ENCODE measurements at regions of chr3 and their contacts with region 1.

Region 1: GRCh38 chr3:44510000-44510368 is 32.5 kb upstream of the ZNF445 start:
- DNase-seq: no peak
- H3K4me3 Mint-ChIP-seq: peak overlapping the region; percentile 90
- H3K27ac Mint-ChIP-seq: peak overlapping the region; percentile 75
- H3K4me1 Mint-ChIP-seq: peaks cover 38% of the 10 kb centered on the region
- H3K27me3 Mint-ChIP-seq: no peaks in the 10 kb centered on the region

Region 2: GRCh38 chr3:44323341-44323955 is 186.5 kb before region 1 on chr3:
- intact Hi-C with region 1: loop called (anchors 2 kb)
- DNase-seq: peak; percentile 22
- H3K4me3 Mint-ChIP-seq: no peak overlapping the region
- H3K27ac Mint-ChIP-seq: no peak overlapping the region
- H3K4me1 Mint-ChIP-seq: no peaks in the 10 kb centered on the region
- H3K27me3 Mint-ChIP-seq: peaks cover 23% of the 10 kb centered on the region

Region 3: GRCh38 chr3:44439499-44440295 is 70.3 kb before region 1 on chr3:
- intact Hi-C with region 1: loop called (anchors 1 kb)
- DNase-seq: peak; percentile 69
- H3K4me3 Mint-ChIP-seq: peak overlapping the region; percentile 65
- H3K27ac Mint-ChIP-seq: peak overlapping the region; percentile 84
- H3K4me1 Mint-ChIP-seq: peaks cover 46% of the 10 kb centered on the region
- H3K27me3 Mint-ChIP-seq: no peaks in the 10 kb centered on the region

Region 4: DNA sequence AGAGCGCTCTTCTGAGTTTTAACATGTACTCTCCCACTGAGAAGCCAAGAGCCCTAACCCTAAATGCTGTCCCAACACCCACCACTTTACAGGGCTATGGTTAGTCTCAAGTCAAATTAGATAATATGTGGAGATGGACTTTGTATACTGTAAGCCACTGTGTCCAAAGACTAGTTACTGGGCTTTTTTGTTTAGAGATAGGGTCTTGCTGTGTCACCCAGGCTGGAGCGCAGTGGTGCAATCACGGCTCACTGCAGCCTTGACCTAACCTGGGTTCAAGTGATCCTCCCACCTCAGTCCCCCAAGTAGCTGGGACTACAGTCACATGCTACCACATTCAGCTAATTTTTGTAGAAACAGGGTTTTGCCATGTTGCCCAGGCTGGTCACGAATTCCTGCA is 55.7 kb before region 1 on chr3:
- intact Hi-C with region 1: no loop called
- DNase-seq: no peak
- H3K4me3 Mint-ChIP-seq: no peak overlapping the region
- H3K27ac Mint-ChIP-seq: no peak overlapping the region
- H3K4me1 Mint-ChIP-seq: no peaks in the 10 kb centered on the region
- H3K27me3 Mint-ChIP-seq: no peaks in the 10 kb centered on the region

Region 5: DNA sequence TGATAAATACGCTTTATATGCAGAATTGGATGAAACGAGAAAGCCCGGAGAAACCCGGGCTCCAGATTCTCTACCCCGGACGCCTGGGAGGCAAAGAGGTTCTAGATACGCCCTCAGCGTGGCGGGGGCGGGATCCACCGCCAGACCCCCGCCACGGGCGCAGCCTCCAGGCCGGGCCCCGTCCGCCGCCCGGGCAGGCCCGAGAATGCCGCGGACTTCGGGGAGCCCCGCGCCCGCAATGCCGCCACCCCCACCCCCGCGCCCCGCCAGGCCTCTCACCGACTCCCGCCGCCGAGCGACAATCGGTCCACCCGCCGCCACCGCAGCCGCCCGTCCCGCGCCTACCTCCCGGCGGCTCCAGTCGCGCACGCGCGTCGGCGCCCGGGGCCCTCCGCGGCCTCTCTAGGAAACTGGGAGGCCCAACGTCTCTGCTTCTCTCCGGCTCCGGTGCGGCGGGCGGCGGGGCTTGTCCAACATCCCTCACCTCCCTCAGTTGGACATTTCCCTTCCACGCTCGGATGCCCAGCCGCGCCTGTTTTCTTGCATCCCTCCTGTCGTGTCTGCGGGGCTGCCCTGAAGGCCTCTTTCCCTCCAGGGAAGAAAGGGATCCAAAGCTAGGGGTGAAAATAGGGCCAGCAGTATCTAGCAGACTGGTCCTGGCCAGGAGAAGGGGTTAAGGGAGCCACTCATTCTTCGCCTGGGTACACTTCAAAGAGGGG is 32.5 kb before region 1 on chr3 and contains the start of gene ZNF445:
- intact Hi-C with region 1: loop called (anchors 1 kb)
- DNase-seq: peak; percentile 76
- H3K4me3 Mint-ChIP-seq: peak within 1 kb of the TSS; percentile 88
- H3K27ac Mint-ChIP-seq: peak within 1 kb of the TSS; percentile 78
- H3K4me1 Mint-ChIP-seq: peaks cover 24% of the 10 kb centered on the region
- H3K27me3 Mint-ChIP-seq: no peaks in the 10 kb centered on the region
- total RNA-seq, gene ZNF445: 18.7 and 19.3 TPM in 2 replicates